Prostate gland (tissue), 2 donors: ENCODE measurements at regions of chr6 and their contacts with region 1.

Region 1: GRCh38 chr6:136643850-136644596 is 93.8 kb upstream of the MAP7 start:
- DNase-seq: peak; percentile 97
- H3K4me3 ChIP-seq: no peak overlapping the region
- H3K27ac ChIP-seq: peak overlapping the region; percentile 53 to 73
- H3K4me1 ChIP-seq: peaks cover 3% of the 10 kb centered on the region
- H3K27me3 ChIP-seq: no peaks in the 10 kb centered on the region
- CTCF ChIP-seq: peak; percentile 85 to 97 (median 96)
- POLR2A ChIP-seq: no peak

Region 2: DNA sequence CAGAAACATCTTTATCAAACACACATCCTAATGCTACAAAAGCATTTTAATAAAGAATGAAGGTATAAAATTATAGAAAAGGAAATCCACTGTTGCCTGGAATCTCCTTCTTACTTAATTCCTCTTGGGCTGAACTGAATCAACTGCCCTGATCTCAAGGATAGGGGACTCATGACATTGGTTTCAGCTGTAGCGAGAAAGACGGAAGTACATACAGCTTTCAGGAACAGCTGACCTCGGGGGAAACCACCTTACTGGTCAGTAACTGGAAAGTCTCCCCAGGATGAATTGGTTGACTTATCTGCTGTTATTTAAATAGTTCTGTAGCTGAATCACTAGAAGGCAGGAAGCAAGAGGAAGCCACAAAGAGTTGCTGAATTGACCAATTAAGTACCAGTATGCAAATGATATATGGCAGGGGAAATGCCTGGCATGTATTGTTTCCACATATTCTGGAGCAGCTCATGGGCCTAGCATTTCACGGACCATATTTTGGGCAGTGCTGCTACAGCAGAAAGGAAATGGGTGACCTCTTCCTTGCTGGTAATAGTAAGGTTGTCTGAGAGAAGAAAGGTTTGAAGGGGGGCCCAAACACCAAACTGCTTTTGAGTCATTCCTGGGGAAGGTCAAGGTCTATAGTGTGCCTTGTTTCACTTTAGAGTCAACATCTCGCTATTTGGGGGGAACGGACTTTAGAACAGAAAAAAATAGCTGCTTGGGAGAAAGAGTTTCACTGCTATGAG is 50.1 kb before region 1 on chr6:
- intact Hi-C with region 1: no loop called
- DNase-seq: no peak
- H3K4me3 ChIP-seq: no peak overlapping the region
- H3K27ac ChIP-seq: no peak overlapping the region
- H3K4me1 ChIP-seq: no peaks in the 10 kb centered on the region
- H3K27me3 ChIP-seq: no peaks in the 10 kb centered on the region
- CTCF ChIP-seq: no peak
- POLR2A ChIP-seq: no peak

Region 3: DNA sequence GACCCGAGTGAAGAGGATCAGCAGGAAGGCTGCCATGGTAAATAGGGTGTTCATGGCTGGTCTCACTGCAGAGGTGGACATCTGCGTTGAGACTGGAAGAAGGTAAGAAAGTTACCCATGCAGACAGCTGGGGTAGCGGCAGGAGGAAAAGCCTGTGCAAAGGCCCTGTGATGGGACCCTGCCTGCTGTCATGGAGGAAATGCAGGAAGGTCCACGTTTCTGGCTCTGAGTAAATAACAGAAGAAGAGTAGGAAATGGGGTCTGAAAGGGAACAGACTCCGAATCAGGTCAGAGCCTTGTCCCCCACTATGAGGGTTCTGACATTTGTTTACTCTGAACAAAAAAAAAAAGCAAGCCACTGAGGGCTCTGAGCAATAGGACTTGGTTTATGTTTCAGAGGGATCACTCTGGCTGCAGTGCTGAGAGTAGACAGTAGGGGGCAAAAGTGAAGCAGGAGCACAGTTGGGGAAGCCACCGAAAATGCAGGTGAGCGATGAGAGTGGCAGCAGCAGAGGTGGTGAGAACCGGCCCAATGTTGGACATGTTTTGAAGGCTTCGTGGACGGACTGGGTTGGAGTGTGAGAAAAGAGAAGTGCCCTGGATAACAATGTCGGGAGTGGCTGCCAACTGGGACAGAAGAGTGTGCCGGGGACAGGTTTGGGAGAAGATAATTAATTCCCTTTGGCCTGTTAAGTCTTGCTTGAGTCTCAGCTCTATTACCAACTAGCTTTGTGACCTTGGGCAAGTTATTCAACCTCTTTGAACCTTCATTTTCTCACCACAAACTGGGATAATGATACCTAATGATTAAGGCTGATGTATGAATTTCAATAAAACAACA is 35.9 kb before region 1 on chr6:
- intact Hi-C with region 1: loop called (anchors 5 kb)
- DNase-seq: peak; percentile 52
- H3K4me3 ChIP-seq: no peak overlapping the region
- H3K27ac ChIP-seq: peak overlapping the region; percentile 38 to 50
- H3K4me1 ChIP-seq: peaks cover 22% of the 10 kb centered on the region
- H3K27me3 ChIP-seq: no peaks in the 10 kb centered on the region
- CTCF ChIP-seq: peak in 3 of 4 experiments; percentile 59 to 63 (median 62)
- POLR2A ChIP-seq: no peak

Region 4: GRCh38 chr6:136737871-136738691 is 94.1 kb after region 1 on chr6:
- intact Hi-C with region 1: loop called (anchors 10 kb)
- DNase-seq: no peak
- H3K4me3 ChIP-seq: no peak overlapping the region
- H3K27ac ChIP-seq: peak overlapping the region in 1 of 2 donors; percentile 7
- H3K4me1 ChIP-seq: no peaks in the 10 kb centered on the region
- H3K27me3 ChIP-seq: no peaks in the 10 kb centered on the region
- CTCF ChIP-seq: no peak
- POLR2A ChIP-seq: no peak

Region 5: GRCh38 chr6:136792410-136793262 is 148.6 kb after region 1 on chr6 and contains the start of gene MAP3K5:
- intact Hi-C with region 1: loop called (anchors 1 kb)
- DNase-seq: peak; percentile 92
- H3K4me3 ChIP-seq: peak within 1 kb of the TSS; percentile 95 to 97
- H3K27ac ChIP-seq: peak within 1 kb of the TSS; percentile 98 to 99
- H3K4me1 ChIP-seq: peaks cover 5% of the 10 kb centered on the region
- H3K27me3 ChIP-seq: no peaks in the 10 kb centered on the region
- CTCF ChIP-seq: peak; percentile 61 to 97 (median 78)
- POLR2A ChIP-seq: peak; percentile 46
- total RNA-seq, gene MAP3K5: 65.7 to 98.4 TPM